Gastrocnemius medialis (tissue), 4 donors: ENCODE measurements at regions of chr15 and their contacts with region 1.

Region 1: DNA sequence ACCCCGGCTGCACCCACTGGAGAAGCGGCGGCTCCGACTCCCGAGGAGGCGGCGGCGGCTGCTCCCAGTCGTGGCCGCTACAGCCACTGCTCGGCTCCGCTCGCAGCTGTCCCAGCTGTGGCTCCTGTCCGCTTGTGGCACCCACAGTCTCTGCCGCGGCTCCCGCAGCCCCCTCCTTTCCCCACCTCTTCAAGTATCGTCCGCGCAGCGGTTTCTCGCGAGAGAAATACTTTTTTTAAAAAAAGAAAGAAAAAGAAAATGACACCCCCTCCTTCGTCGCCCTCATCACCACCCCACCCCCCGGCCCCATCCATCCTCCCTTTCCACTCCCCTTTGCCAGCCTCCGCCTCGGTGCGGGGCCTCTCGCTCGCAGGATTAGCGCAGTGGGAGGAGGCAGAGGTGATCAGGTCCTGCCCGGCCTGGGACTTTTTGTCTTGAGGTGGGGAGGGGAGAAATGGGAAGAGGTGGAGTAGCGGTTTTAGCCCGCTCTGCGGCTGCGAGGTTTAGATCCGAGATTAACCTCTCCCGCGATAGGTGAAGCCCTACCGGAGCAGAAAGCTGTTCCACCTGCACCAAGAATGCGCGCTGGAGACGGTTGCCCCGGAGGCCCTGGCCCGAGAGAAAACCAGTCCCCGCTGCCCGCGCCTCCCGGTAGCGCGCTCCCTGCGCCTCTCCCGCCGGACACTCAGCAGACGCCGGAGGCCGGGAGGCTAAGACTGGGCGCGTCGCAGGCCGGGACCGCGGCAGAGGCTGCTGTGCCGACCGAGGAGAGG is at the start of gene FBN1:
- DNase-seq: peak; percentile 33 to 53
- ATAC-seq: peak; percentile 58
- H3K4me3 ChIP-seq: peak within 1 kb of the TSS; percentile 64 to 74 (median 68)
- H3K27ac ChIP-seq: peak within 1 kb of the TSS; percentile 64 to 75 (median 74)
- H3K4me1 ChIP-seq: no peaks in the 10 kb centered on the region
- H3K27me3 ChIP-seq: peaks cover 4 to 22% (median 8%) of the 10 kb centered on the region in 3 donors
- CTCF ChIP-seq: no peak
- POLR2A ChIP-seq: peak; percentile 53 to 76
- total RNA-seq, gene FBN1: 13.0 to 28.0 (median 20.9) TPM

Region 2: DNA sequence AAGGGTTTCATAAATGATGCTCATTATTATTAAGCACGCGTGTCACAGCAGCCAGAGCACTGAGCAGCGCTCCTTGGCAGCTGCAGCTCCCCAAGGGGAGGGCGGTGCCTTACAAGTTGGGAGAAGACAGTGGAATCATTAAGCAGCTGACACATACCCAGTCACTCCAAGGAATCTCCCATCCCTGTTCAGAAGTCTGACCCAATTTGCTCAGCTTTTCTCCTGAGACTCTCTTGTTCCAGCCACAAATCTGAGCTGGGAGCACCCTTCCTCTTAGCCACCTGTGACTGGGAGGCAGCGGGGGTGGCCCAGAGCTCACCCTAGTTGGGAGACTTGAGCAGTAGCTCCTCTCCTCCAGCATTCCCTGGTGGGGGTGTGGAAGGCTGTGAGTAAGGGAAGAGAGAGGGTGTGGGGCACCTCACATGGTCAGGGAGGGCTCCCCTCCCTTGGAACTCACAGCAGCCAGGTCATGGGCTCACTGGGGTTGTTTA is 250.2 kb before region 1 on chr15:
- in situ Hi-C with region 1: no loop called
- intact Hi-C with region 1: loop called (anchors 10 kb)
- DNase-seq: peak; percentile 64 to 84
- ATAC-seq: peak; percentile 56 to 74
- H3K4me3 ChIP-seq: no peak overlapping the region
- H3K27ac ChIP-seq: peak overlapping the region; percentile 58 to 72 (median 70)
- H3K4me1 ChIP-seq: peaks cover 0 to 13% of the 10 kb centered on the region in 2 donors
- H3K27me3 ChIP-seq: no peaks in the 10 kb centered on the region
- CTCF ChIP-seq: no peak
- POLR2A ChIP-seq: no peak

Region 3: GRCh38 chr15:48472753-48473152 is 173.0 kb before region 1 on chr15:
- in situ Hi-C with region 1: no loop called
- intact Hi-C with region 1: no loop called
- DNase-seq: no peak
- ATAC-seq: no peak
- H3K4me3 ChIP-seq: no peak overlapping the region
- H3K27ac ChIP-seq: no peak overlapping the region
- H3K4me1 ChIP-seq: peaks cover 0 to 3% of the 10 kb centered on the region in 2 donors
- H3K27me3 ChIP-seq: no peaks in the 10 kb centered on the region
- CTCF ChIP-seq: no peak
- POLR2A ChIP-seq: no peak

Region 4: GRCh38 chr15:48507416-48508065 is 138.2 kb before region 1 on chr15:
- in situ Hi-C with region 1: no loop called
- intact Hi-C with region 1: loop called (anchors 10 kb)
- DNase-seq: no peak
- ATAC-seq: no peak
- H3K4me3 ChIP-seq: no peak overlapping the region
- H3K27ac ChIP-seq: no peak overlapping the region
- H3K4me1 ChIP-seq: no peaks in the 10 kb centered on the region
- H3K27me3 ChIP-seq: no peaks in the 10 kb centered on the region
- CTCF ChIP-seq: peak in 3 of 5 experiments; percentile 28 to 42 (median 30)
- POLR2A ChIP-seq: no peak

Region 5: GRCh38 chr15:48794697-48795134 is 149.0 kb after region 1 on chr15:
- in situ Hi-C with region 1: no loop called
- intact Hi-C with region 1: loop called (anchors 10 kb)
- DNase-seq: no peak
- ATAC-seq: no peak
- H3K4me3 ChIP-seq: no peak overlapping the region
- H3K27ac ChIP-seq: peak overlapping the region in 1 of 4 donors; percentile 10
- H3K4me1 ChIP-seq: no peaks in the 10 kb centered on the region
- H3K27me3 ChIP-seq: no peaks in the 10 kb centered on the region
- CTCF ChIP-seq: no peak
- POLR2A ChIP-seq: no peak